Activated CD8-positive, alpha-beta T cell treated with anti-CD3 and anti-CD28 coated beads, Interleukin-2, amount 10 ng/mL, durations not matched to agents 7 days and 5 days (primary cell): ENCODE measurements at regions of chr13 and their contacts with region 1.

Region 1: DNA sequence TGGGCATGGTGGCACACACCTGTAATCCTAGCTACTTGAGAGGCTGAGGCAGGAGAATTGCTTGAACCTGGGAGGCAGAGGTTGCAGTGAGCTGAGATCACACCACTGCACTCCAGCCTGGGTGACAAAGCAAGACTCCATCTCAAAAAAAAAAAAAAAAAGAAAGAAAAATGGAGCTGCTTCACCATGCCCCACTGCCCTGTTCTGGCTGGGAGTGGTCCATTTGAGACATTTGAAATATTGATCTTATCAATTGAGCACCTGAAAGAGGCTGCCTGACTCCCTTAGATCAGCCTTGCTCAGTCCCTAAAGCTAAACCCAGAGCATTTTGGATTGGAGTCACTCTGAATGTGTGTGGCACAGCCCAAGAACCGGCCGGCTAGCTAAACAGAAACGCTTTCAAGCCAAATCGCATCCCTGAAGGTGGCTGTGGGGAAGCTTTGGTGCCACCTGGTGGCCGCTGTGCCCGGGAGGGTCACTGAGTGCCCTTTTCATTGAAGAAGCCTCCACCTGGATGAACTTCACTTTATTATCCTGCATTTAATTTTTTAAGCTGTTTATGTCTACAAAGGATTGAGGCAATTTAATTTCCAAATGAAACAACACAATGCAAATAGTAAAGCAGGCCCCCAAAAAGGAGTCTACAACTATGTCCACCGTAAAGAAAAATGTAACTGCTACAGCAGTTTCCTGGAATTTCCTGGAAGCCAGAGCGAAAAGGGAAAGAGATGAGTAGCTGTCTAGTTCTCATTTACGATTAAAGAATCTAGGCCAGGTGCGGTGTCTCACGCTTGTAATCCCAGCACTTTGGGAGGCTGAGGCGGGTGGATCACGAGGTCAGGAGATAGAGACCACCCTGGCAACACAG is 53.1 kb upstream of the SERPINE3 start:
- DNase-seq: peak; percentile 80
- ATAC-seq: peak; percentile 92
- H3K4me3 Mint-ChIP-seq: no peak overlapping the region
- H3K27ac Mint-ChIP-seq: no peak overlapping the region
- H3K4me1 Mint-ChIP-seq: peaks cover 16% of the 10 kb centered on the region
- H3K27me3 Mint-ChIP-seq: peaks cover 2% of the 10 kb centered on the region

Region 2: GRCh38 chr13:51148952-51149573 is 137.3 kb before region 1 on chr13:
- CTCF ChIA-PET with region 1: interaction called, 23 read pairs
- POLR2A ChIA-PET with region 1: no interaction called
- DNase-seq: no peak
- ATAC-seq: no peak
- H3K4me3 Mint-ChIP-seq: no peak overlapping the region
- H3K27ac Mint-ChIP-seq: no peak overlapping the region
- H3K4me1 Mint-ChIP-seq: no peaks in the 10 kb centered on the region
- H3K27me3 Mint-ChIP-seq: peaks cover 13% of the 10 kb centered on the region

Region 3: DNA sequence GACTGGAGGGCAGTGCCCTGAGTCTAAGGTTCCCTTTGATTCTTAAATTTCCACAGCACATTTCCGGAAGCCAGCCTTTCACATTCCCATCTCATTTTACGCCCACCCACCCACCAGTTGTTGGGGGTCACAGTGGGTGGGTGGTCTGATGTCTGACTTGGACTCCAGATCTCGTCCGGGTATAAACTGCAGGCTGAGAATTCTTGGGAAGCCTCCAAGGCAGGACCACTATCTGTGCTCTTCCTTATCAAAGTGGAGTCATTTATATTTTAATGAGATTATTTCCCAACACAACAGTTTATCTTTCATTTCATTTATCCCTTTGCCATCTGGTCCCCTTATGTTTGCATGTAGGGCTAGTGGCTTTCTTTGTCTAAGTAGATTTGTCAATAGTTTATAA is 67.7 kb before region 1 on chr13:
- CTCF ChIA-PET with region 1: interaction called, 14 read pairs
- POLR2A ChIA-PET with region 1: no interaction called
- DNase-seq: no peak
- ATAC-seq: no peak
- H3K4me3 Mint-ChIP-seq: no peak overlapping the region
- H3K27ac Mint-ChIP-seq: no peak overlapping the region
- H3K4me1 Mint-ChIP-seq: peaks cover 4% of the 10 kb centered on the region
- H3K27me3 Mint-ChIP-seq: peaks cover 44% of the 10 kb centered on the region

Region 4: DNA sequence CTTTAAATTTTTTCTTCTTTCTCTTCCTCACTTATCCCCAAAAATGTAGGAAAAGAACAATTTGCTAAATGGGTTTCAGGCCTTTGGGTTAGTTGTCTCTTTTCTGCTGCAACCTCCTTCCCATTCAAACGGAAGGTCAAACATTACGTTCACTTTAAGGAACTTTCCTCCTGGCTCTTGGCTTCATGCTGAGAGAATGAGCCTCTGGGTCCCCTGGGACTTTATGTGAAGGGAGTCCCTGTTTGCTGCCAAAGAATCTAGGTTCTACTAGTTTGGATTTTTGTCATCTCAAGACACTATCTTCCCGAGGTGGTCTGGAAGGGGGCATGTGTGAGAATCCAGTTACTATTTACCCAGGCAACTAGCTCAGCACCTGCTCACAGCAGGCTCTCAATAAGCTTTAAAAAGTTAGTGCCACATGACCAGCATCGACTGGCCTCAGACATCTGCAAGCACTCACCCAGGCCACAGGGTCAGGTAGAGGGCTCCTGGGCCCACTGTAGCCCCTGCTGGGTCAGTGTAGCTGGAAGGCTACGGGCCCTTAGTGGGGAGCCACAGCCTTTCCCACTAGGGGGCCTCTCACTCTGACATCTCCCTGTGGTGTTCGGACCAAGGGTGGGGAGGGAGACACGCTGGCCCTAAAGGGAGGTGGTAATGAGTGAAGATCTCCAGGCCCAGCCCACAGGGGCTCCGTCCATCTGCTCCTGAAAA is 23.7 kb before region 1 on chr13:
- CTCF ChIA-PET with region 1: interaction called, 15 read pairs
- POLR2A ChIA-PET with region 1: no interaction called
- DNase-seq: no peak
- ATAC-seq: no peak
- H3K4me3 Mint-ChIP-seq: no peak overlapping the region
- H3K27ac Mint-ChIP-seq: no peak overlapping the region
- H3K4me1 Mint-ChIP-seq: no peaks in the 10 kb centered on the region
- H3K27me3 Mint-ChIP-seq: no peaks in the 10 kb centered on the region

Region 5: GRCh38 chr13:51297556-51297955 is 11.2 kb after region 1 on chr13:
- CTCF ChIA-PET with region 1: interaction called, 49 read pairs
- POLR2A ChIA-PET with region 1: no interaction called
- DNase-seq: no peak
- ATAC-seq: no peak
- H3K4me3 Mint-ChIP-seq: no peak overlapping the region
- H3K27ac Mint-ChIP-seq: no peak overlapping the region
- H3K4me1 Mint-ChIP-seq: no peaks in the 10 kb centered on the region
- H3K27me3 Mint-ChIP-seq: peaks cover 2% of the 10 kb centered on the region

Region 6: DNA sequence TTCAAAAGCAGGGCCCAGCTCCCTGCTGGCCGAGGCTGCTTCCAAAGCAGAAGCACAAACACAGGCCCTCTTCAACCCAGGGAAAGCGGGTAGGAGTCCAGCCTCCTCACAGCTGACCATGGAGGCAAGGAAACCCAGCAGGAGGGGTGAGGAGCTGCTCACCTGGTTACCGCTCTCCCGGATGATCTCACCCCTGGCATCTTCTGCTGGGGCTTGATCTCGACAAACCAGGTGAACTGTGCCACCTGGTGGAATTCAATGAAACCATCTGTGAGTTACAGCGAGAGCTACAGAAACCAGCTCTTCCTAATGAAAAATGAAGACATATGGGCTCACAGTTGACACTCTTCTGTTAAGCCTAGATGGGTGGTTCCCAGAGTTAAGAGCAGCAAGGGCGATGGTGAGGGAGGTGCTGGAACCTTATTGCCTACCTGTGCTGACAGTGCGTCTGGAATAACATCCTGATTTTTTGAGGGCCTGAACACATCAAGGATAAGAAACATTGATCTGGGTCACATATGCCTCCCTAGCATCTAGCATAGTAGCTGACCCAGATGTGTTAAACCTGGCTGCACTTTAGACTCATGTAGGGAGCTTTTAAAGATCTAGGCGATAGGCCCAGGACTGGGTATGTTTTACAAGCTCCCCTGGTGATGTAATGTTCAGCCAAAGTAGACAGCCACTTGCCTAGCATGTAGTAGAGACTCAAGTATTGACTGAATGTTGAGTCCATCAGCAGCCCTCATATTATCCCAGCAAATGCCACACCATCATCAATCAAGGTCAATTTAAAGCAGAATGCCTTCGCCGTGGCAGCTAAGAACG is 511.5 kb after region 1 on chr13:
- CTCF ChIA-PET with region 1: interaction called, 47 read pairs
- POLR2A ChIA-PET with region 1: no interaction called
- DNase-seq: peak; percentile 77
- ATAC-seq: peak; percentile 76
- H3K4me3 Mint-ChIP-seq: no peak overlapping the region
- H3K27ac Mint-ChIP-seq: no peak overlapping the region
- H3K4me1 Mint-ChIP-seq: peaks cover 24% of the 10 kb centered on the region
- H3K27me3 Mint-ChIP-seq: no peaks in the 10 kb centered on the region

Region 7: DNA sequence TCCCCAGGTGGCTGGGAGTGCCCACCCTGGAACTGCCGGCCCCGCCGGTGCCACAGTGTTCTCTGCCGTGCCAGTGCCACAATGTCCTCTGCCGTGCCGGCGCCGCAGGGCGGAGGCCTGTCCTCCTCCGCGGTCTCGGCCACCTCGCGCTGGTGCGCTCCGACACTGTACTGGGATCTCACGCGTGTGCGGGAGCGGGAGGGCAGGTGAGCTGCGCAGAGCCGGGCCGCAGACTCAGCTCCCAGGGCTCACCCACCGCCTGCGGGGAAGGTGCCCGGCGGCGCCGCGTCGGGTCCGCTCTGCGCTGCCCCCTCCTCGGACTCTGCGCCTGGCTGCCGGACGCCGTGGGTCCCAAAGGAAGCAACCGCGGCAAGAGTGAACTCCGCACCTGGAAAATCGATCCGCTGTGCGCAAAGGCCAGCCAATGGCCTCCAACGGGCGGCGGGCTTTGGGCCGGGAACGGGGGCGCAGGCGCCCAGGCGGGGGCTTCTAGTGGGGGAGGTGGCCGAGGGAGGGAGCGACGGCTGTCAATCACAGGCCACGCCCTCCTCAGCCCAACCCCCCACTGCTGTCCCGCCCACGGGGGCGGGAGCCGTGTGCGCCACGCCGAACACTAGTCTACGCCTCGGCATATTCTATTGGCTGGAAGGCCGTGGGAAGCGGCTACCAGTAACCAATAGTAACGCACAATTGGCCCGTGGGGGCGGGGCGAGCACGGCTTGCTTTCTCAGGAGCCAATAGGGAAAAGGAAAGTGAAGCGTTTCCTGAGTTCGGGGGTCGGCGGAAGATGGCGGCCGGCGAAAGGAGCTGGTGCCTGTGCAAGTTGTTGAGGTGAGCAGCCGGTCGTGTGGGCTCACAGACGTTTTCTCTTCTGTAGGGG is 725.5 kb after region 1 on chr13 and contains the start of gene ALG11:
- CTCF ChIA-PET with region 1: no interaction called
- POLR2A ChIA-PET with region 1: no interaction called
- DNase-seq: peak; percentile 100
- ATAC-seq: peak; percentile 100
- H3K4me3 Mint-ChIP-seq: peak within 1 kb of the TSS; percentile 99
- H3K27ac Mint-ChIP-seq: peak within 1 kb of the TSS; percentile 92
- H3K4me1 Mint-ChIP-seq: peaks cover 13% of the 10 kb centered on the region
- H3K27me3 Mint-ChIP-seq: peaks cover 28% of the 10 kb centered on the region
- total RNA-seq, gene ALG11: 22.9 to 28.3 TPM